ENCODE measurements at regions of chr19 and their contacts with region 1.

Region 1: DNA sequence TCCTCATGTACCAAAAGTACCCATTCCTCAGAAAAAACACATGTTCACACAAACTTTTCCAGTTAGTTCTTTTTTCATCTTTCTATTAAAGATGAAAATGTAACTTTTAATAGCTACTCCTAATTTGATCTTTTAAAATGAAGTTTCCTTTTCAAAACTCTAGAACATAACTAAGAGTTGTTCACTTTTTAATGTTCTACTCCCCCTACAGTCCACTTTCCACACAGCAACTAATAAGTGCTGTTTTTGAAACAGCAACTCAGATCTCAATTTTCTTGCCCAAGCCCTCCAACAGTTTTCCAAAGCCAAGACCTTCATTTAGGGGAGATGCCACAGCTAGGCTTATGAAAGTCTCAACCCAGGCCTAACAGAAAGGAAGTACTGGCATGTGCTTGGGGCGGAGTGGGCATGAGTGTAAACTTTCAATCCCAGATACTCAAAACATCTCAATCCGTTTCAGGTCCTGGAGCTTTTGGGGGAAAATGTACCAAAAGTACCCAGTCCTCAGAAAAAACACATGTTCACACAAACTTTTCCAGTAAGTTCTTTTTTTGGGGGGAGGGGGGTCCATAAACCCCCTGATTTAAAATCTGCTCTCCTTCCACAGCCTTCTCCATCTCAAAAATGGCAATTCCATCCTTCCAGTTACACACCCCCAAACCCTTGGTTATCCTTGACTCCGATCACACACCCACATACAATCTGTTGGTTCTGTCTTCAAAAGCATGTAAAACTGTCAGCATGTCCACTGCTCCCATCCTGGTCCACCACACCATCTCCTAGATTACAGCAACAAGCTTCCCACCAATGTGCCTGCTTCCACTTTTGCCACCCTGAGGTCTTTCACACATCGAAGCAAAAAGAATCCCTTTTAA is 2.0 kb downstream of the FBL start:
- DNase-seq: no peak
- H3K4me3 ChIP-seq: no peak overlapping the region
- H3K27ac ChIP-seq: no peak overlapping the region
- H3K4me1 ChIP-seq: peaks cover 13% of the 10 kb centered on the region
- H3K27me3 ChIP-seq: no peaks in the 10 kb centered on the region
- CTCF ChIP-seq: peak; percentile 37

Region 2: GRCh38 chr19:39780894-39781293 is 63.3 kb before region 1 on chr19:
- intact Hi-C with region 1: no loop called
- DNase-seq: no peak
- H3K4me3 ChIP-seq: no peak overlapping the region
- H3K27ac ChIP-seq: no peak overlapping the region
- H3K4me1 ChIP-seq: no peaks in the 10 kb centered on the region
- H3K27me3 ChIP-seq: no peaks in the 10 kb centered on the region
- CTCF ChIP-seq: no peak

Region 3: DNA sequence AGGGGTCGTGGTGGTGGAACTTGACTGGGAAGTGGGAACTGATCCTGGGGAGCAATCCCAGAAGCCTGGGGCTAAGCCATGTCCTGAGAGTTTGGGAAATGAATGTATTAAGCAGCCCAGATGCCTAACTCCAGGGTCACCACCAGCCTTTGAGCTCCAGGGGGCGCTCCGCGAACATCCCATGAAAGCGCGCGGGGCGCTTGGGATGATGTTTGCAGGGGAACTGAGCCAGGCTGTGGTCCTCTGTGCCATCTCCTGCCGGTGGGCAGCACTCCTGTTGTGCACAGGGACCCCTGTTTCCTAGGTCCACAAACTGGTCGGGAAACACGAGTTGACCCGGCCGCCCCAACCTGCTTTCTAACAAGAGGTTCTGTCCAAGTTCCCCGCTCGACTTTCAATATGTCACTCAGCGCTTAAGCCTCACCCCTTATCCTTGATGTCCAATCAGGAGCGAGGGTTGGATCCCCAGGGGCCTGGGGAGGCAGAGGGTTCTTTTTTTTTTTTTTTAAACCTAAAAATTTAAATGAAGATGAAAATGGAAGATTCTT is 51.1 kb before region 1 on chr19:
- intact Hi-C with region 1: loop called (anchors 5 kb)
- DNase-seq: peak; percentile 72
- H3K4me3 ChIP-seq: peak overlapping the region; percentile 36
- H3K27ac ChIP-seq: no peak overlapping the region
- H3K4me1 ChIP-seq: no peaks in the 10 kb centered on the region
- H3K27me3 ChIP-seq: no peaks in the 10 kb centered on the region
- CTCF ChIP-seq: peak; percentile 83

Region 4: GRCh38 chr19:39805104-39805503 is 39.1 kb before region 1 on chr19:
- intact Hi-C with region 1: no loop called
- DNase-seq: no peak
- H3K4me3 ChIP-seq: no peak overlapping the region
- H3K27ac ChIP-seq: no peak overlapping the region
- H3K4me1 ChIP-seq: no peaks in the 10 kb centered on the region
- H3K27me3 ChIP-seq: no peaks in the 10 kb centered on the region
- CTCF ChIP-seq: no peak

Measured in colonic mucosa (tissue), 4 donors.